ENCODE measurements at regions of chr14 and their contacts with region 1.

Region 1: GRCh38 chr14:74793506-74794168 is 30.5 kb downstream of the YLPM1 start:
- DNase-seq: no peak
- H3K4me3 ChIP-seq: no peak overlapping the region
- H3K27ac ChIP-seq: peak overlapping the region in 2 of 5 donors; percentile 4 to 50
- H3K4me1 ChIP-seq: peaks cover 9 to 22% of the 10 kb centered on the region in 2 donors
- H3K27me3 ChIP-seq: no peaks in the 10 kb centered on the region
- CTCF ChIP-seq: peak in 4 of 6 experiments; percentile 15 to 38 (median 28)
- POLR2A ChIP-seq: no peak

Region 2: GRCh38 chr14:74501135-74501614 is 292.5 kb before region 1 on chr14:
- intact Hi-C with region 1: loop called in 1 of 2 experiments (anchors 10 kb)
- DNase-seq: peak; percentile 69 to 89 (median 88)
- H3K4me3 ChIP-seq: no peak overlapping the region
- H3K27ac ChIP-seq: no peak overlapping the region
- H3K4me1 ChIP-seq: no peaks in the 10 kb centered on the region
- H3K27me3 ChIP-seq: no peaks in the 10 kb centered on the region
- CTCF ChIP-seq: peak; percentile 53 to 83 (median 74)
- POLR2A ChIP-seq: no peak

Region 3: GRCh38 chr14:74905375-74906142 is 111.9 kb after region 1 on chr14:
- intact Hi-C with region 1: no loop called
- DNase-seq: peak; percentile 69 to 91 (median 77)
- H3K4me3 ChIP-seq: no peak overlapping the region
- H3K27ac ChIP-seq: no peak overlapping the region
- H3K4me1 ChIP-seq: peaks cover 0 to 6% of the 10 kb centered on the region in 2 donors
- H3K27me3 ChIP-seq: no peaks in the 10 kb centered on the region
- CTCF ChIP-seq: peak; percentile 89 to 96 (median 94)
- POLR2A ChIP-seq: no peak

Region 4: GRCh38 chr14:75011356-75011994 is 217.8 kb after region 1 on chr14:
- intact Hi-C with region 1: no loop called
- DNase-seq: peak in 1 of 7 donors; percentile 15
- H3K4me3 ChIP-seq: no peak overlapping the region
- H3K27ac ChIP-seq: peak overlapping the region in 4 of 5 donors; percentile 33 to 61 (median 59)
- H3K4me1 ChIP-seq: peaks cover 32 to 46% of the 10 kb centered on the region in 2 donors
- H3K27me3 ChIP-seq: no peaks in the 10 kb centered on the region
- CTCF ChIP-seq: no peak
- POLR2A ChIP-seq: no peak